AG04449 (cell line): ENCODE measurements at regions of chr15 and their contacts with region 1.

Region 1: DNA sequence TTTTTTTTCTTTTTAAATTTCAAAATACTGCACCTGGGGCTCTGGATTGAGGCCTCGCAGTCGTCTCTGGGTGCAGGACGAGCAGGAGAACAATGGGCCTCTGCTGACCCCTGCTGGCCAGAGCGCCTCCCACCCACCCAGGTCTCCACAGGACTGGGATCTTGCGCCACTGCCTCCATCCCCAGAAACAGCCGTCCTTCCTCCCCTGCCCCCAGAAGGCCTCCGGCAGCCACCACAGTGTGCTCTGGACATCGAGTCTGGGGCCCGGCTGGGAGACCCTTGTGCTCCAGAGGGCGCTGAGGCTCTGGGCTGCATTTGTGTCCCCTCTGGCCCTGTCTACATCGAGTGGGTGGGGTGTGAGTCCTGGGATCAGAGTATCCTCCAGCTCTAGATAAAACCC is 6.6 kb upstream of the ACSBG1 start:
- DNase-seq: no peak
- H3K4me3 ChIP-seq: no peak overlapping the region
- CTCF ChIP-seq: peak; percentile 96

Region 2: GRCh38 chr15:78101463-78102139 is 139.4 kb before region 1 on chr15:
- CTCF ChIA-PET with region 1: interaction called, 352 read pairs
- POLR2A ChIA-PET with region 1: no interaction called
- DNase-seq: no peak
- H3K4me3 ChIP-seq: no peak overlapping the region
- CTCF ChIP-seq: no peak

Region 3: DNA sequence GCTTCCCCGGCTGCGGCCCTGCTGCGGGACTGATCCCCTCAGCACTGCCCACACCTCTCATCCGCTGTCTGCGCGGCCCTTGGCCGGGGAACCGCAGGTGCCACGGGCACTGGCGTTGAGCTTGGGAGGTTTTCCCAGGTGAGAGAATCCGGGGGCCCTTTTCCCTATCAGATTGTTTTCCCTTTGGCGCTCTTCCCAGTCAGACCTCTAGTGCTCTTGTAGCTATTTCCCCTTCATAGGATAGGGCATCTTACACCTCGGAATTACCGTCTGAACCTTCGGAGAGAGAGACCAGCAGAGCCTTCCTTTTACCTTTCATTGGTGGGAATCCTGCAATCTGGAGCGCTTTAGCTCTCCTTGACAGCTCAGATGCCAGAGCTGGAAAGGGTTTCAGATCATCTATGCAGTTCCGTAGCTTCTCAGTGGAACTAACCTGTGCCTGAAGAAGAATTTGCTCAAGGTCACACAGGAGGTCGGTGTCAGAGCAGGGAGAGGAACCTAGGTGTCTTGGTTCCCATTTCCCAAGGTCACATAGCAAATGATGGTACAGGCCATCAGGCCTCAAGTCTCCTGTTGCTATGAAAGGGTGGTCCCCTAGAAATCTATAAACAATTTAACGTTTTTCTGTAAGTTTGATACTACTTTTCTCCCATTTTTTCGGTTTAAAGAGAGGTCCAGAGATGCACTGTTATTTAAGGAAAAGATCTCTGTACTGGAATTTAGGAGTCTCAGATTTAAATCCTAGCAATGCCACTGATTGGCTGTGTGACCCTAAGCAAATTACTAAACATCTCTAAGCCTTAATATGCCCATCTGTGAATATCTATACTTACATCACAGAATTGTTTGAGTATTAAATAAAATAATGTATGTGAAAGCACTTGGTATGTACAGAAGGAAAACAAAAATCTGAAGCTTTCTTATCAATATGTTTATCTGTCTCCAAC is 90.9 kb before region 1 on chr15:
- CTCF ChIA-PET with region 1: interaction called, 13 read pairs
- POLR2A ChIA-PET with region 1: no interaction called
- DNase-seq: no peak
- H3K4me3 ChIP-seq: peak overlapping the region; percentile 74
- CTCF ChIP-seq: no peak

Region 4: GRCh38 chr15:78204351-78205309 is 36.4 kb before region 1 on chr15:
- CTCF ChIA-PET with region 1: interaction called, 35 read pairs
- POLR2A ChIA-PET with region 1: no interaction called
- DNase-seq: no peak
- H3K4me3 ChIP-seq: no peak overlapping the region
- CTCF ChIP-seq: no peak

Region 5: GRCh38 chr15:78259232-78259631 is 18.2 kb after region 1 on chr15:
- CTCF ChIA-PET with region 1: interaction called, 102 read pairs
- POLR2A ChIA-PET with region 1: no interaction called
- DNase-seq: no peak
- H3K4me3 ChIP-seq: no peak overlapping the region
- CTCF ChIP-seq: no peak

Region 6: DNA sequence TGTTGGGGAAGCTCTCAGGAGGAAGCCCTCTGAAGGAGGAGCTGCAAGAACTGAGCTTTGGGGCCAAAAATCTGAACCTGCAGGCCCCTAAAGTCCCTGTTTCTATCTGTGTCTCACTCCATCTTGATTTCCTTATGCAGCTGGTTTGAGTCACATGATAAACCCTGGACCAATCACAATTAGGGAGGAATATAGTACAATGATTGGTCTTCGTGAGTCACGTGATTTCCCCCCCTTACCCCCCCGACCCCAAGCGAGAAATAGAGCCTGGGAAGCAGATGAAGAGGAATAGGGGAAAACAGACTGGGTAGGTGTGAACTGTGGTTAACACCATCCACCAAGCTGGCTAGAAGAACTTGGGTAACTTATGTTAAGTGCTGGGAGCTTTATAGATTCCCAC is 112.1 kb after region 1 on chr15:
- CTCF ChIA-PET with region 1: no interaction called
- POLR2A ChIA-PET with region 1: no interaction called
- DNase-seq: no peak
- H3K4me3 ChIP-seq: no peak overlapping the region
- CTCF ChIP-seq: no peak

Region 7: DNA sequence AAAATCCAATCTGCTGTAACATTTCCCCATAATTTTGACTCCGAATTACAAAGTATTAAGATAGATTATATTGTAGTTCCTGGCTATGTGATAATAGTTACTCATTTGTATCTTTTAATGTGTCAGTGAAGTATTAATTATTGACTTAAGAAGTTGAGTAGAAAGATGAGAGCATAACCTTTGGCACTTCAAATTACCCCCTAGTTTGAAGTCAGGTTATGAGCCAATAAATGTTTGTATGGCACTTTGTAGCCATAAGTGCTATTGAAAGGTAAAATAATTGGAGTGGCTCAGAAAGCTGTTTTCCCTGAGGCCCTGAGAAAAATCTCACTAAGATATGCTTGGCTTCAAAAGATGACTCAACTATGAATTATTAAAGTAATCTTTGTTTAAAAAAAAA is 228.0 kb after region 1 on chr15:
- CTCF ChIA-PET with region 1: no interaction called
- POLR2A ChIA-PET with region 1: no interaction called
- DNase-seq: no peak
- H3K4me3 ChIP-seq: no peak overlapping the region
- CTCF ChIP-seq: no peak